Calu3 (cell line): ENCODE measurements at regions of chr2 and their contacts with region 1.

Region 1: DNA sequence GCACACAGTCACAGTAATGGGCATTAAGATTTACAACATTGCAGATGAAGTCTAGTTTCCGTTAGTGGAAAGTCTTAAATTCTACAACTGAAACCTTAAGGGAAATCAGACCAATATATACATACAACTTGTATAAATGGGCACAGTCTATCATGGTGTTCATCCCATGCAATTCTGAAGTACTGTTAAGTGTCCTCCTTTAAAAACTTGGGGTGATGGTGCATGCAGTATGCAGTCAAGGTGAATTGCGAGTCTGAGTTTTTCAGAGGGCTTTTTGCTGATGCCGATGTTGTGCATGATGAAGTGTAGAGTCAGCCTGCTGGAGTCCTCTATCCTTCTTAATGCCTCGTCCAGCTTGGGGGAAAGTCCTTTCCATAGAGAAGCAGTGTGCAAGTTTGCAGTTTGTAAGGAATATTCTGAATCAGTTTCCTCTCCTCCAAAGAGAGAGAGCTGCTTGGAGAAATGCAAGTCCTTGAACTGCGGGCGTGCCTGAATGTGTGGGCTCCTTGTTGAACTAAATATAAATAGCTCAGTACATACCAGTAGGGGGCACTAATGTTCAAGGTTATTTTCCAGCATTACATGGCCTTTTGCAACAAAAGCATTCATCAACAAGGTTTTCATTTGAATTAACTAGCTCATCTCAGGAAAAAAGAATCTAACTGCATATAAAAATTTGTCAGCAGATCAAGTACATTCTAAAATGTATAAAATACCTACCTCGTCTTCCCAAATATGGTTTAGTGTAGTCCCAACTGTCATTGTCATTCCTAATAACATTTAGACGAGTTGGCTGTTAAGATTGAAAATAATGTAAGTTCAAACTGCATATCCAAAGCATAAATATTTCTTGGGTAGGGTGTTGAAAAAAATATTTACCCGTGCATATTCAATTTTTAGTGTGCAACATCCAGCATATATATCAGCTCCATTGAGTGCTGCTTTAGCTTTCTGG is 21.3 kb downstream of the HNRNPLL start:
- DNase-seq: peak; percentile 30
- H3K4me3 Mint-ChIP-seq: no peak overlapping the region
- H3K27ac Mint-ChIP-seq: no peak overlapping the region
- H3K4me1 Mint-ChIP-seq: peaks cover 9% of the 10 kb centered on the region
- H3K27me3 Mint-ChIP-seq: no peaks in the 10 kb centered on the region
- CTCF ChIP-seq: peak; percentile 52

Region 2: DNA sequence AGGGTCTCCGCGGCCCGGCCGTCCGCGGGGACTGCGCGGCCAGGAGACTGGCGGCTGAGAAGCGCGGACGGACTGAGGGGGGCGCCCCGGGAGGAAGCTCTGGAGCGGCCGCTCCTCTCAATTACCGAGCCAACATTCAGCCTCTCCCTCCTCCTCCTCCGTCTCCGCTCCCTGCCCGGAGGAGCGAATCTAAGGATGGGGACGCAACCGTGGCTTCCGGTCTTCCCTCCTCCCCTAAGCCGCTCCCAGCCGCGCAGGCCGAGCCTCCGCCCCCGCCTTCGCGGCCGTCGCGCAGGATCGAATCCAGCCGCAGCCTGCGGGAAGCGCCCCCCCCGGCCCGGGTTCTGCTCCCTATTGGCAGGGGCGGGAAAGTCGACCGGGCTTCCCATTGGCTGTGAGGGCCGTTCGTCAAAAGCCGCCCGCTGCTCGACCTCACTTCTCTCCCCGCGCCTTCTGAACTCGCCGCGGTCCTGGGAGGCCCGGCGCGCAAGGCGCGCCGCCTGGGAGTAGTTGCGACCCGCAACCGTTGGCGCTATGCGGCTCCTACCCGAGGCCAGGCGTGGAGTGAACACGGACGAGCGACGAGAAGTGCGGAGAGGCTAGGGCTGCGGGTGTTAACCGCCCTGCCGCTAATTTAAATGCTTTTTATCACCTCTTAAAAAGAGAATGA is 21.4 kb after region 1 on chr2 and contains the start of gene HNRNPLL:
- CTCF ChIA-PET with region 1: interaction called, 12 read pairs
- intact Hi-C with region 1: no loop called
- DNase-seq: peak; percentile 99
- H3K4me3 Mint-ChIP-seq: peak within 1 kb of the TSS; percentile 86
- H3K27ac Mint-ChIP-seq: peak within 1 kb of the TSS; percentile 75
- H3K4me1 Mint-ChIP-seq: peaks cover 29% of the 10 kb centered on the region
- H3K27me3 Mint-ChIP-seq: no peaks in the 10 kb centered on the region
- CTCF ChIP-seq: no peak
- total RNA-seq, gene HNRNPLL: 47.6 and 51.3 TPM in 2 replicates

Region 3: GRCh38 chr2:38690499-38691294 is 109.2 kb after region 1 on chr2:
- CTCF ChIA-PET with region 1: interaction called, 10 read pairs
- intact Hi-C with region 1: no loop called
- DNase-seq: peak; percentile 46
- H3K4me3 Mint-ChIP-seq: no peak overlapping the region
- H3K27ac Mint-ChIP-seq: peak overlapping the region; percentile 43
- H3K4me1 Mint-ChIP-seq: peaks cover 38% of the 10 kb centered on the region
- H3K27me3 Mint-ChIP-seq: no peaks in the 10 kb centered on the region
- CTCF ChIP-seq: no peak

Region 4: GRCh38 chr2:38722271-38723061 is 141.0 kb after region 1 on chr2:
- CTCF ChIA-PET with region 1: interaction called, 6 read pairs
- intact Hi-C with region 1: loop called (anchors 1 kb)
- DNase-seq: no peak
- H3K4me3 Mint-ChIP-seq: no peak overlapping the region
- H3K27ac Mint-ChIP-seq: no peak overlapping the region
- H3K4me1 Mint-ChIP-seq: peaks cover 18% of the 10 kb centered on the region
- H3K27me3 Mint-ChIP-seq: no peaks in the 10 kb centered on the region
- CTCF ChIP-seq: no peak

Region 5: GRCh38 chr2:38740851-38741731 is 159.6 kb after region 1 on chr2:
- CTCF ChIA-PET with region 1: interaction called, 5 read pairs
- intact Hi-C with region 1: loop called (anchors 5 kb)
- DNase-seq: no peak
- H3K4me3 Mint-ChIP-seq: no peak overlapping the region
- H3K27ac Mint-ChIP-seq: peak overlapping the region; percentile 20
- H3K4me1 Mint-ChIP-seq: peaks cover 9% of the 10 kb centered on the region
- H3K27me3 Mint-ChIP-seq: no peaks in the 10 kb centered on the region
- CTCF ChIP-seq: peak; percentile 63